Esophagus muscularis mucosa (tissue), 4 donors: ENCODE measurements at regions of chr10 and their contacts with region 1.

Region 1: DNA sequence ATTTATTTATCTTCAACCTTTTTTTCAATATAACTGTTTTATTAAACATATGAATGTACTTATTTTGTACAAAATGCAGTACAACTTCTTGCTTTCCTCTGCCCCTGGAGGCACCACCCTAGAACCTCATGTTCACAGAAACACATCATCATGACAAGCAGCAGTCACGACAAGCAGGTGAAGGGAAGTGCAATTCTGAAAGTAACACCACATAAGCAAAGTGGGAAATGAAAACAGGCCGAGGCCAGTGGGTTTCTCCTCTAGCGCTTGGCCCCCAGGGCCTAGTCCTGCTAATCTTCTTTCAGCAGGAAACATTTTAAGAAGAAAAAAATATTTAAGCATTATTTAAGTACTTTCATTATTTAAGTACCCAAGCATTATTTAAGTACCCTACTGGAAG is 598.1 kb downstream of the SH2D4B start:
- DNase-seq: no peak
- H3K4me3 ChIP-seq: no peak overlapping the region
- H3K27ac ChIP-seq: no peak overlapping the region
- H3K4me1 ChIP-seq: no peaks in the 10 kb centered on the region
- H3K27me3 ChIP-seq: no peaks in the 10 kb centered on the region
- CTCF ChIP-seq: no peak
- EP300 ChIP-seq: no peak
- POLR2A ChIP-seq: no peak

Region 2: DNA sequence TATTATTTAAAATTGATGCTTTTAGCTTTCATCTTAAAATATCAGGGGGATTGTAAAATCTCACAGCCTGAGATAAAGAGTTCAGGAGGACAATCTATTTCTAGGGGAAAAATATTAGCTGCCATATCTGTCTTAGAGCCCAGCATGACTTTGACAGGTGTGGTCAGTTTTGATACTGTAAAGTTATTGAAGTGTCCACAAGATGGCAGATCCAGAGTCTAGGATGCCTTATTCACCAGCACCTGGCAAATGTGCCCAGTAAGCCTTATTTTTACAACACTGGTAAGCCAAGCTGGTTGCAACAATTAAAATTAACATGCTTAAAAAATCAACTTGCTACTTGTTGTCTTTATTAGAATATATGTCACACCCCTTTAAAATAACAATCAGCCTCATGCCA is 18.9 kb before region 1 on chr10:
- intact Hi-C with region 1: loop called (anchors 1 kb)
- DNase-seq: no peak
- H3K4me3 ChIP-seq: no peak overlapping the region
- H3K27ac ChIP-seq: no peak overlapping the region
- H3K4me1 ChIP-seq: no peaks in the 10 kb centered on the region
- H3K27me3 ChIP-seq: no peaks in the 10 kb centered on the region
- CTCF ChIP-seq: no peak
- EP300 ChIP-seq: no peak
- POLR2A ChIP-seq: no peak